ENCODE measurements at regions of chr9 and their contacts with region 1.

Region 1: DNA sequence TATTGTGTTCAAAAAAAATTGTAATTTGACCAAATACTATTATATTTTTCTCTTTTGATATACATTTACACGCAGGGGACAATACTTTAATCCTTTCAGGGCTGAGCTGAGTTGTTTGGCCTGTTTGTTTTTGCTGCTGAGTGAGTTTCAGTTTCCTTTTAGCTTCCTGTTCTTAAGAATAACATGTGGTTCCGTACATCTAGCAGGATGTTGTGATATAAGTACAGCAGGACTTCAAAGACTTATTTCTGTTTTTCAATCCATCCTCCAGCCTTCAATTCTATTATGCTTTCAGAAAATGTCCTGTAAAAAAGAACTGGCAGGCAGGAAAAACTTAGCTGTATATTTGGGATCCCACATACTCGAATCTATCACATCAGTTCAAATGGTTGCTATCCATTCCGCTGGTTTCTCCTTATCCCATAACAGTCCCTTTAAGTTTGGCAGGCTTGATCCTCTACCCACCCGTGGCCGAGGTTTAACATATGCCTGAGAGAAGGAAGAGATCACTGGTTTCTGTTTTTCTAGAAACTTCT is 1037.3 kb upstream of the ACO1 start:
- DNase-seq: no peak
- ATAC-seq: peak; percentile 94
- H3K4me3 Mint-ChIP-seq: peak overlapping the region; percentile 65
- H3K27ac Mint-ChIP-seq: peak overlapping the region; percentile 95
- H3K4me1 Mint-ChIP-seq: peaks cover 32% of the 10 kb centered on the region
- H3K27me3 Mint-ChIP-seq: no peaks in the 10 kb centered on the region

Region 2: GRCh38 chr9:30846651-30847050 is 500.5 kb before region 1 on chr9:
- CTCF ChIA-PET with region 1: no interaction called
- POLR2A ChIA-PET with region 1: no interaction called
- intact Hi-C with region 1: no loop called
- DNase-seq: no peak
- ATAC-seq: no peak
- H3K4me3 Mint-ChIP-seq: no peak overlapping the region
- H3K27ac Mint-ChIP-seq: no peak overlapping the region
- H3K4me1 Mint-ChIP-seq: no peaks in the 10 kb centered on the region
- H3K27me3 Mint-ChIP-seq: no peaks in the 10 kb centered on the region

Region 3: GRCh38 chr9:31390356-31391025 is 43.3 kb after region 1 on chr9:
- CTCF ChIA-PET with region 1: no interaction called
- POLR2A ChIA-PET with region 1: no interaction called
- intact Hi-C with region 1: no loop called
- DNase-seq: no peak
- ATAC-seq: peak; percentile 58
- H3K4me3 Mint-ChIP-seq: no peak overlapping the region
- H3K27ac Mint-ChIP-seq: no peak overlapping the region
- H3K4me1 Mint-ChIP-seq: peaks cover 9% of the 10 kb centered on the region
- H3K27me3 Mint-ChIP-seq: no peaks in the 10 kb centered on the region

Region 4: DNA sequence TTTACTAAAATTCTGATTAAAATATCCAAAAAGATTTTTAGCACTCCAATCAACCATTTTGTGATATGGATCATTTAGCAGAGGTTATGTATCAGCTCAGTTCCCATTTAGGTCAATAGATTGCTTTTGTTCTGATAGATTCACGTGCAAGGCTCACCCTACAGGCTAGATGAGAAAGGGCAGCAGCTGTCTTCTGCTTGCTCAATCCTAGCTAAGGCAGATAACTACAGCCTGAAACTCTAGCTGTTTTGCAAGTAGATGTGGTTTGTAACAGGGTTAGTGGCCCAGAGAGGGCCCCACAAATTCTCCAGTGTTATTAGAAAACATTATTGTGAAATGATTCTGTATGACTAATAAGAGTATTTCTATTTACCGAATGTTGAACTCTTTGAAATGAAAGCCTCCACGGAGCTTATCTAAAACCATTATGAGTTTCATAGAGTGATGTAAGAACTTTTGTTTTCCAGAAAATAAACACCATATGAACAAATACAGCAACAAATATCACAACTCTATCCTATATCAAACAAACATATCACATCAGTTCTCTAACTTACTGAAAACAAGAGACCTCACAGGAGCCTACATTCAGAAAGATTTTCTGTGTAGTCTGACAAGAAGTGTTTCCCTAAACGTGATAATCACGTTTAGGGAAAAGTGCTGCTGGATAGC is 195.4 kb after region 1 on chr9:
- CTCF ChIA-PET with region 1: no interaction called
- POLR2A ChIA-PET with region 1: no interaction called
- intact Hi-C with region 1: loop called in 1 of 2 experiments (anchors 5 kb)
- DNase-seq: peak; percentile 36
- ATAC-seq: peak; percentile 95
- H3K4me3 Mint-ChIP-seq: no peak overlapping the region
- H3K27ac Mint-ChIP-seq: no peak overlapping the region
- H3K4me1 Mint-ChIP-seq: peaks cover 13% of the 10 kb centered on the region
- H3K27me3 Mint-ChIP-seq: no peaks in the 10 kb centered on the region

Measured in activated CD4-positive, alpha-beta T cell treated with anti-CD3 and anti-CD28 coated beads for 36 hours (primary cell).